Activated CD4-positive, alpha-beta T cell treated with anti-CD3 and anti-CD28 coated beads for 36 hours (primary cell): ENCODE measurements at regions of chr2 and their contacts with region 1.

Region 1: DNA sequence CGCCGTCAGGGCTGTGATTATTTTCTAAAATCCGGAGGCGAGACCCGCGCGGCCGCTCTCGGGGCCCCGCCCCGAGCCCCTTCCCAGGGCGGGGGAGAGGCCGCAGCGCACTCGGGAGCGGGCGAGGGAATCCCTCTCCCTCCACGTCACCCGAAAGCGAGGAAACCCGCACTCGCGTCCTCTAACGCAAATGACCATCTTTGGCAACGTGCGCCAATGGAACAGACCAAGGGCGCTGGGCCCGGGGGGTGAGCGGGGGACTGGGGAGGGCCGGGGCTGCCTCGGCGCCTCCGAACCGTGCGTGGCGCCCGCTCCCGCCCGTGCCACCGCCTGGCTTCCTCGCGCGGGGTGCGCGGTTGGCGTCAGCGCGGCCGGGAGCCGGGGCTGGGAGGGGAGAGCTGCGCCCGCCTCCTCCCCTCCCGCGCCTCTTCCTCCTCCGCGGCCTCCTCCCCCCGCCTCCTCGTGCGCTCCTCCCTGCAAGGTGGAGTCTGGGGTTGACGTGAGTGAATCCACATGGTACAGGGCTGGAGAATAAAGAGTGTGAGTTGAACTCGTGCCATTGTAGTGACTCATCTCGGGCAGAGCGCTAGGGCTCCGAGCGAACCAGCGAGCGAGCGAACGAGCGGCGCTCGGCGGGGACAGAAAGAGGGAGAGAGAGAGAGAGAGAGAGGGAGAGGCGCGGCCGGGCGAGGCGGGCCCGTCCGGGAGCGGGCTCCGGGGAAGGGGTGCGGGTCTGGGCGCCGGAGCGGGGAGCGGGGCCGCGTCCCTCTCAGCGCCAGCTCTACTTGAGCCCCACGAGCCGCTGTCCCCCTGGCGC is at the start of gene FOSL2:
- DNase-seq: peak; percentile 96
- ATAC-seq: peak; percentile 74
- H3K4me3 Mint-ChIP-seq: no peak within 1 kb of the TSS
- H3K27ac Mint-ChIP-seq: peak within 1 kb of the TSS; percentile 99
- H3K4me1 Mint-ChIP-seq: peaks cover 30% of the 10 kb centered on the region
- H3K27me3 Mint-ChIP-seq: no peaks in the 10 kb centered on the region
- total RNA-seq, gene FOSL2: 135 to 225 TPM

Region 2: GRCh38 chr2:27071277-27071989 is 1321.1 kb before region 1 on chr2 and contains the start of gene OST4:
- CTCF ChIA-PET with region 1: no interaction called
- POLR2A ChIA-PET with region 1: no interaction called
- intact Hi-C with region 1: no loop called
- DNase-seq: peak; percentile 94
- ATAC-seq: peak; percentile 89
- H3K4me3 Mint-ChIP-seq: peak within 1 kb of the TSS; percentile 96
- H3K27ac Mint-ChIP-seq: peak within 1 kb of the TSS; percentile 91
- H3K4me1 Mint-ChIP-seq: peaks cover 66% of the 10 kb centered on the region
- H3K27me3 Mint-ChIP-seq: no peaks in the 10 kb centered on the region
- total RNA-seq, gene OST4: 305 to 406 TPM

Region 3: DNA sequence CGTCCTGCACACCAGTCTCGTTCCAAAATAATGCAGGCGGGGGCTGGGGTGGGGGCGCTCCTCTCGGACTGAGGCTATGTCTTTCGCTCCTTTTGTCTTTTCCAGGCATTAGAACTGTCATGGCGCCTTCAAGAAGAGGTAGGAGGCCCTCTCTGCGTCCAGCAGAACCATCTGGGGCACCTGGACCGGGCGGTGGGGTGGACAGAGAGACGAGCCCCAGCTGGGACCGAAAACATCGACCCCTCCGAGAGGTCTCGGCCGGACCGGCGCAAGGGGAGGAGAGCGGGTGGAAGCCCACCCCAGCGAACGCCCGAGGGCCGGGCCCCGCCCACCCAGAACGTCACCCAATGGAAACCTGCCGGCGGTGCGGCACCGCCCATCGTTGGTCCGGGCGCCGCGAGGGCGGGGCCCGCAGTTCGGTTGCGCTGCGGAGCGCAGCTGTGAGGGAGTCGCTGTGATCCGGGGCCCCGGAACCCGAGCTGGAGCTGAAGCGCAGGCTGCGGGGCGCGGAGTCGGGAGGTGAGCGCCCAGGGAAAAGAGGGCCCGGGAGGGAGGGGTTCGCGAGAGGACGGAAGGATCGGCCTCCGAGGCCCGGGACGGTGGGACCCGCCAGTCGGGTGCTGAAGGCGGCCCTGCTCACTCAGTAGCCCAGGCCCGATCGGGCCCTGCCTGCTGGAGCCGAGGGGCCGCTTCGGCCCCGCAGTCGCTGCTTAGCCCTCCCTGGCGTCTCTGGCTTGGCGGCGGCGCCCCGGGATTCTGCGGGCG is 964.1 kb before region 1 on chr2 and contains the start of gene NRBP1:
- CTCF ChIA-PET with region 1: no interaction called
- POLR2A ChIA-PET with region 1: no interaction called
- intact Hi-C with region 1: loop called in 1 of 2 experiments (anchors 2 kb)
- DNase-seq: peak; percentile 97
- ATAC-seq: peak; percentile 85
- H3K4me3 Mint-ChIP-seq: peak within 1 kb of the TSS; percentile 100
- H3K27ac Mint-ChIP-seq: peak within 1 kb of the TSS; percentile 98
- H3K4me1 Mint-ChIP-seq: peaks cover 37% of the 10 kb centered on the region
- H3K27me3 Mint-ChIP-seq: no peaks in the 10 kb centered on the region
- total RNA-seq, gene NRBP1: 74.3 to 74.4 TPM

Region 4: DNA sequence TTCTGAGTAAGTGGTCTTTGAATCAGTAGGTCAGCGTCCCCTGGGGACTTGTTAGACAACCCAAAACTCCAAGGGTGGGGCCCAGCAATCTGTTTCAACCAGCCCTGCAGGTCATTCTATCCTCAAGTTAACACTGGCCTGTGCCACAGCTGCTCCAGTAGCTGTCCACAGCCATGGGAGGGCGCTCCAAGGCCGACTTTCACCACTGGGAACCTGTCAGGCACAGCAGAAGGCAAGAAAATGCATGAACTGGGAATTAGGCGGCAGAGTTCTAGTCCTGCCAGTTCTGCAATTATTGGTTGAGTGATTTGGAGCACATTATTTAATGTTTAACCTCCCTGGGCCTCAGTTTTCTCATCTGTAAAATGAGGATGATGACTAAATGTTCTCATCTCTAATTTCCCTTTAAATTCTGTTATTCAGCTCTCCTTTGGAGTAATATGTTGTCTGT is 638.3 kb before region 1 on chr2:
- CTCF ChIA-PET with region 1: interaction called, 4 read pairs
- POLR2A ChIA-PET with region 1: no interaction called
- intact Hi-C with region 1: loop called in 1 of 2 experiments (anchors 2 kb)
- DNase-seq: peak; percentile 92
- ATAC-seq: peak; percentile 99
- H3K4me3 Mint-ChIP-seq: no peak overlapping the region
- H3K27ac Mint-ChIP-seq: no peak overlapping the region
- H3K4me1 Mint-ChIP-seq: peaks cover 3% of the 10 kb centered on the region
- H3K27me3 Mint-ChIP-seq: peaks cover 3% of the 10 kb centered on the region

Region 5: GRCh38 chr2:27798948-27799645 is 593.4 kb before region 1 on chr2:
- CTCF ChIA-PET with region 1: no interaction called
- POLR2A ChIA-PET with region 1: no interaction called
- intact Hi-C with region 1: no loop called
- DNase-seq: no peak
- ATAC-seq: no peak
- H3K4me3 Mint-ChIP-seq: no peak overlapping the region
- H3K27ac Mint-ChIP-seq: no peak overlapping the region
- H3K4me1 Mint-ChIP-seq: no peaks in the 10 kb centered on the region
- H3K27me3 Mint-ChIP-seq: no peaks in the 10 kb centered on the region

Region 6: GRCh38 chr2:28155627-28156026 is 236.9 kb before region 1 on chr2:
- CTCF ChIA-PET with region 1: interaction called, 3 read pairs
- POLR2A ChIA-PET with region 1: no interaction called
- intact Hi-C with region 1: loop called (anchors 2 to 10 kb)
- DNase-seq: peak; percentile 33
- ATAC-seq: no peak
- H3K4me3 Mint-ChIP-seq: no peak overlapping the region
- H3K27ac Mint-ChIP-seq: no peak overlapping the region
- H3K4me1 Mint-ChIP-seq: no peaks in the 10 kb centered on the region
- H3K27me3 Mint-ChIP-seq: no peaks in the 10 kb centered on the region

Region 7: DNA sequence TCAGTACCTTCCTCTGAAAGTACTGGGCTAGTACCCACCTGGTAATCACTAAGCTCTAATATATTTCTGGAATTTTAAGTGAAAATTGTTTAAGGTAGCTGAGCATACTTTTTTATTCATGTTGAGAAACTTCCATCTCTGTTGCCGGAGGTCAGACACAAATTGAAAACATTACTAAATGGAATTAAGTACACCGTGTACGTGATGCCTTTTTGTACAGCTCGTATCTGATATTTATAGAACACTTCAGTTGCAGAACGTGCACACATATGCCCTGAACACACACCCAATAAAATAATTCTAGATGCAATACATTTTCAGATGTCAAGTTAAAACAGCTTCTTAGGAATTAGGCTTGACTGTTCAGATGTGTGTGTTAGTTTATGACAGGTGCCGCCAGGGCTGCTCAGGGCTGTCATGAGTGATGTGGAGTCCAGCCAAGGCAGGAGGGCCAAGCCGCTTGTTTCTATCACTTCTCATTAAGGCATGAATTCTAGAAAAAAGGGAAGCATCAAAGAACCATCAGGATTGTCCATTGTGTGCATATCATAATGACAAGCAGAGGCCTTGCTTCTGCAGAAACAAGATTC is 80.8 kb before region 1 on chr2:
- CTCF ChIA-PET with region 1: no interaction called
- POLR2A ChIA-PET with region 1: no interaction called
- intact Hi-C with region 1: no loop called
- DNase-seq: no peak
- ATAC-seq: no peak
- H3K4me3 Mint-ChIP-seq: no peak overlapping the region
- H3K27ac Mint-ChIP-seq: no peak overlapping the region
- H3K4me1 Mint-ChIP-seq: peaks cover 9% of the 10 kb centered on the region
- H3K27me3 Mint-ChIP-seq: no peaks in the 10 kb centered on the region

Region 8: GRCh38 chr2:28413142-28413898 is 20.8 kb after region 1 on chr2:
- CTCF ChIA-PET with region 1: interaction called, 3 read pairs
- POLR2A ChIA-PET with region 1: interaction called, 9 read pairs
- intact Hi-C with region 1: loop called (anchors 1 kb)
- DNase-seq: no peak
- ATAC-seq: no peak
- H3K4me3 Mint-ChIP-seq: no peak overlapping the region
- H3K27ac Mint-ChIP-seq: peak overlapping the region; percentile 47
- H3K4me1 Mint-ChIP-seq: peaks cover 42% of the 10 kb centered on the region
- H3K27me3 Mint-ChIP-seq: no peaks in the 10 kb centered on the region

Region 9: GRCh38 chr2:28507806-28508764 is 115.6 kb after region 1 on chr2:
- CTCF ChIA-PET with region 1: no interaction called
- POLR2A ChIA-PET with region 1: no interaction called
- intact Hi-C with region 1: no loop called
- DNase-seq: peak; percentile 62
- ATAC-seq: peak; percentile 98
- H3K4me3 Mint-ChIP-seq: no peak overlapping the region
- H3K27ac Mint-ChIP-seq: no peak overlapping the region
- H3K4me1 Mint-ChIP-seq: peaks cover 16% of the 10 kb centered on the region
- H3K27me3 Mint-ChIP-seq: peaks cover 8% of the 10 kb centered on the region

Region 10: DNA sequence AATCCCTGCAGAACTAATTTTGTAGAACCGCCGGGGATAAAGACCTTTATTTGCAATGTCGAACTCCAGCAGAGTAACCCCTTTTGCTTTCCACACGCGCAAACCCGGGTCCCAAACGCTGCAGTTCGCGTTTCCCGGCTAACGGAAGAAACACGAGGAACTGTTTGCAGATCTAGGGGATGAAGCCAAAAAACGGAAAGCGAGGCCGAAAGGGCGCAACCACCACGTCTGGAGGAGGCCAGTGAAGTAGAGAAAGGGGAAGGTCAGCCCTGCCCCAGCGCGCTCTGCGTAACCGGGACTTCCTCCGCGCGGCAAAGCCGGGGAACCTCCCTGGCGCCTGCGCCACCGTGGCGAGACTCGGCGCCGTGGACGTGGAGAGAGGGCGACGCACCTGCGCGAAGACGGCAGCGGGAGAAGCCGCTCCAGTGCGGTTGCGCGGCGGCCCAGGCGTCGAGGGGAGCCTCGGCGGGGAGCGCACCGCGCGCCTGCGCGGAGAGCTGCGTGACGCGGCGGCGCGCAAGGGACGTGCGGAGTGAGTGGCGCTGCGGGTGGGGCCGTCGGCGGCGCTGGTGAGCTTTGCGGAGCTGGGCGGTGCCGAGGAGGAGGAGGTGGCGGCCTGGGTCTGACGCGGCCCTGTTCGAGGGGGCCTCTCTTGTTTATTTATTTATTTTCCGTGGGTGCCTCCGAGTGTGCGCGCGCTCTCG is 358.9 kb after region 1 on chr2 and contains the start of gene PPP1CB:
- CTCF ChIA-PET with region 1: no interaction called
- POLR2A ChIA-PET with region 1: interaction called, 3 read pairs
- intact Hi-C with region 1: loop called (anchors 1 to 5 kb)
- DNase-seq: peak; percentile 96
- ATAC-seq: peak; percentile 88
- H3K4me3 Mint-ChIP-seq: peak within 1 kb of the TSS; percentile 90
- H3K27ac Mint-ChIP-seq: peak within 1 kb of the TSS; percentile 95
- H3K4me1 Mint-ChIP-seq: peaks cover 53% of the 10 kb centered on the region
- H3K27me3 Mint-ChIP-seq: no peaks in the 10 kb centered on the region
- total RNA-seq, gene PPP1CB: 153 to 213 TPM